ENCODE measurements at regions of chr11 and their contacts with region 1.

Region 1: GRCh38 chr11:95150946-95151684 is 61.5 kb downstream of the ENDOD1 start:
- DNase-seq: peak; percentile 96
- ATAC-seq: peak; percentile 95
- H3K4me3 Mint-ChIP-seq: peak overlapping the region; percentile 87
- H3K27ac Mint-ChIP-seq: peak overlapping the region; percentile 85
- H3K4me1 Mint-ChIP-seq: peaks cover 34% of the 10 kb centered on the region
- H3K27me3 Mint-ChIP-seq: peaks cover 5% of the 10 kb centered on the region
- CTCF ChIP-seq: no peak

Region 2: DNA sequence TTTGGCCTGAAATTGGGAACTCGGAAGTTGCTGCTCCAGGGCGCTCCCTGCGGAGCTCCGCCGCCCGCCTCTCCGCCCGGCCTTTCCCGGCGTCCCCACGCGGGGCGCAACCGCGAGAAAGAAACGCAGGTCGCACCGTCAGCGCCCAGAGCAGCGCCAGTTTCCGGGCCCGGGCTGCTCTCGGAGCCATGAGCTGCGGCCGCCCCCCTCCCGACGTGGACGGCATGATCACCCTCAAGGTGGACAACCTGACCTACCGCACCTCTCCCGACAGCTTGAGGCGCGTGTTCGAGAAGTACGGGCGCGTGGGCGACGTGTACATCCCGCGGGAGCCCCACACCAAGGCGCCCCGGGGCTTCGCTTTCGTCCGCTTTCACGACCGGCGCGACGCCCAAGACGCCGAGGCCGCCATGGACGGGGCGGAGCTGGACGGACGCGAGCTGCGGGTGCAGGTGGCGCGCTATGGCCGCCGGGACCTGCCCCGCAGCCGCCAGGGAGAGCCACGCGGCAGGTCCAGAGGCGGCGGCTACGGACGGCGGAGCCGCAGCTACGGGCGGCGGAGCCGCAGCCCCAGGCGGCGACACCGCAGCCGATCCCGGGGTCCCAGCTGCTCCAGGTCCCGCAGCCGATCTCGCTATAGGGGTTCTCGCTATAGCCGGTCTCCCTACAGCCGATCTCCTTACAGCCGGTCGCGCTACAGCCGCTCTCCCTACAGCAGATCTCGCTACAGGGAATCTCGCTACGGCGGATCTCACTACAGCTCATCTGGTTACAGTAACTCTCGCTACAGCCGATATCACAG is 83.9 kb before region 1 on chr11:
- CTCF ChIA-PET with region 1: interaction called, 185 read pairs
- POLR2A ChIA-PET with region 1: interaction called, 12 read pairs
- intact Hi-C with region 1: loop called (anchors 2 kb)
- DNase-seq: peak; percentile 78
- ATAC-seq: peak; percentile 64
- H3K4me3 Mint-ChIP-seq: peak overlapping the region; percentile 100
- H3K27ac Mint-ChIP-seq: peak overlapping the region; percentile 98
- H3K4me1 Mint-ChIP-seq: peaks cover 22% of the 10 kb centered on the region
- H3K27me3 Mint-ChIP-seq: no peaks in the 10 kb centered on the region
- CTCF ChIP-seq: peak; percentile 41

Region 3: GRCh38 chr11:95111923-95112540 is 39.1 kb before region 1 on chr11:
- CTCF ChIA-PET with region 1: no interaction called
- POLR2A ChIA-PET with region 1: no interaction called
- intact Hi-C with region 1: no loop called
- DNase-seq: no peak
- ATAC-seq: no peak
- H3K4me3 Mint-ChIP-seq: no peak overlapping the region
- H3K27ac Mint-ChIP-seq: no peak overlapping the region
- H3K4me1 Mint-ChIP-seq: peaks cover 6% of the 10 kb centered on the region
- H3K27me3 Mint-ChIP-seq: no peaks in the 10 kb centered on the region
- CTCF ChIP-seq: no peak

Region 4: DNA sequence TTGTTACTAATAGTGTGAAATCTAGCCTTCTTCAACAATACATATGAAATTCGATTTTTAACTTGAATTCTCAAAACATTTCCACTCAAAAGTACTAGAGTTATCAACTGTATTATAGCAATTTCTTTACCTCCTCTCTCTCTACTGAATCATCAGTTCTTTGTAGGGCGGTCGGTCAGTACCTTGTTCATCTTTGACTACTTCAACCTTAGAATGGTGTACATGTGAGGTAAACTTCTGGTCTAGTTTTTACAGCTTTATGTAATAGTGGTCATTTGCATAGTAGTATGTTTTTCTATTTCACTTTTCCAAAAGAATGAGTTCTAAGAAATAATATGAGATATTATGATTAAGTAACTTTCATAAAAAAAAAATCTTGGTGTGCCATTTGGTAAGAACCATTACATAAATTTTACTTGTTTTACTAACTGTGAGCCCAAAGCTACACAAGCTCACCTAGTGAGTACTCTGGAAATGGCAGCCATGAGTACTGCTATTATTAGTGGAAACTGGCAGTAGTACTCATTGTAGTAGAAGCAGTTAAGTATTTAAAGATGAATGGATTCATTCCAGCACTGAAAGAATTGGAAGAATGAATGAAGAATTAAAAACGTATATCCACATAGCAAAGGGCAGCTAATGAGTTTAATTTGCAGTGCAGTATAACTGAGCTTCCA is 49.8 kb after region 1 on chr11:
- CTCF ChIA-PET with region 1: interaction called, 11 read pairs
- POLR2A ChIA-PET with region 1: no interaction called
- intact Hi-C with region 1: no loop called
- DNase-seq: no peak
- ATAC-seq: no peak
- H3K4me3 Mint-ChIP-seq: no peak overlapping the region
- H3K27ac Mint-ChIP-seq: no peak overlapping the region
- H3K4me1 Mint-ChIP-seq: peaks cover 39% of the 10 kb centered on the region
- H3K27me3 Mint-ChIP-seq: no peaks in the 10 kb centered on the region
- CTCF ChIP-seq: no peak

Region 5: GRCh38 chr11:95231127-95231880 is 80.2 kb after region 1 on chr11 and contains the start of gene SESN3:
- CTCF ChIA-PET with region 1: interaction called, 18 read pairs
- POLR2A ChIA-PET with region 1: interaction called, 3 read pairs
- intact Hi-C with region 1: loop called (anchors 5 kb)
- DNase-seq: peak; percentile 98
- ATAC-seq: peak; percentile 93
- H3K4me3 Mint-ChIP-seq: peak within 1 kb of the TSS; percentile 92
- H3K27ac Mint-ChIP-seq: peak within 1 kb of the TSS; percentile 78
- H3K4me1 Mint-ChIP-seq: peaks cover 39% of the 10 kb centered on the region
- H3K27me3 Mint-ChIP-seq: no peaks in the 10 kb centered on the region
- CTCF ChIP-seq: no peak
- total RNA-seq, gene SESN3: 19.4 to 19.5 TPM

Region 6: DNA sequence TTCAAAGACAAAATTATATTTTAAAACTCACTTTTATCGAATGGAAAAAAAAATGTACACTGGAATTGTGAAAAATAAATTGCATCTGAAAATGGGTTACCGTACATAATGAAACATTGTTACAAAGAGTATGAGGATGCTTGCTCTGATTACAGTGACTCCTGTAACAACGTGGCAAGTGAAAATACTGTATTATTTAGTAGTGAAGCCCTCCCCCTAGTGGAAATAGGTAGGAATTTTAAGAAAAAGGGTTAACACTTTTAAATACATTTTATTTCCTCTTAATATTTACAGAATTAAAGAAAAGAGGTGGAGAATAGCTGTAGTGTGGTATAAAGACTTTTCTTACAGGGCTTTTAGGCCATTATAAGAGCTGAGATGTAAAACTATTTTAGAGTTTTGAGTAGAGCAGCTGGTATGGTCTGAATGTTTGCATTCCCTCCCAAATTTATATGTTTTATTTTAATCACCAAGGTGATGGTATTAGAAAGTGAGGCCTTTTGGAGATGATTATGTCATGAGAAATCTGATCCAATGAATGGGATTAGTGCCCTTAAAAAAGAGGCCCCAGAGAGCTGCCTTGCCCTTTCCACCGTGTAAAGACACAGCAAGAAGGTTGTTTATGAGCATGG is 613.3 kb after region 1 on chr11:
- CTCF ChIA-PET with region 1: interaction called, 214 read pairs
- POLR2A ChIA-PET with region 1: interaction called, 3 read pairs
- intact Hi-C with region 1: loop called (anchors 1 kb)
- DNase-seq: no peak
- ATAC-seq: peak; percentile 84
- H3K4me3 Mint-ChIP-seq: no peak overlapping the region
- H3K27ac Mint-ChIP-seq: no peak overlapping the region
- H3K4me1 Mint-ChIP-seq: no peaks in the 10 kb centered on the region
- H3K27me3 Mint-ChIP-seq: peaks cover 3% of the 10 kb centered on the region
- CTCF ChIP-seq: peak; percentile 76